Right cardiac atrium (tissue), 5 donors: ENCODE measurements at regions of chr17 and their contacts with region 1.

Region 1: DNA sequence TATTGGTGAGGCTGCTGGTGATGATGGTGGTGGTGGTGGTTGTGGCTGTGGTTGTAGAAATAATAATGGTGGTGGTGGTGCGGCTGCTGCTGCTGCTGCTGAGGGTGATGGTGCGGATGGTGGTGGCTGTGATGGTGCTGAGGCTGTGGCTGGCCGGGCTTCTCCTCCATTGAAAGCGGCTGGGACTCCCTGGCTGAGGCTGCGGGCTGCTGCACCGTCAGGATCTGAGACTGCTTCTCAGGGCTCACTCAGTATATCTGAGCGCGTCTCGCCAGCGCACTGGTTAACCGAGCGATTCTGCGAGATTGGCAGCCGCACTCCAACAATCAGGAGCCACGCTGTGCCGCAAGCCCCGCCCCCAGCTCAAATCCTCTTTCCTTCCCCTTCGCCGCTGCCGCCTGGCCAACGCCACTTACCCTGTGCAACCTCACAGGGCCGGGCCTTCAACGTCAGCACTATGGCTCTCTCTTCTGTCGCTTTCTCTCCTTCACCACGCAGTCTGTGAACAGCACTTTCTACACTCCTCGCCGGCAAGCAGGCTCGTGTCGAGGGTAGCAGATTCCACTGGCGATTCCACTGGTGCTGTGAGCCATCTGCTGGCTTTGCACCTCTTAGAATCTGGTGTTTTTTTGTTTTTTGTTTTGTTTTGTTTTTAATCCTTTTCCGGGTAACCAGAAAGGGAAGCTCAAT is at the start of gene NUFIP2:
- DNase-seq: peak; percentile 99 to 100 (median 100)
- ATAC-seq: peak; percentile 96
- H3K4me3 ChIP-seq: peak within 1 kb of the TSS; percentile 91
- H3K27ac ChIP-seq: peak within 1 kb of the TSS; percentile 97
- H3K4me1 ChIP-seq: no peaks in the 10 kb centered on the region
- H3K27me3 ChIP-seq: no peaks in the 10 kb centered on the region
- total RNA-seq, gene NUFIP2: 30.9 to 44.7 (median 41.4) TPM

Region 2: GRCh38 chr17:28951991-28952975 is 341.8 kb before region 1 on chr17:
- intact Hi-C with region 1: loop called in 1 of 4 experiments (anchors 10 kb)
- DNase-seq: peak; percentile 96 to 99 (median 97)
- ATAC-seq: peak; percentile 89 to 91
- H3K4me3 ChIP-seq: peak overlapping the region; percentile 66
- H3K27ac ChIP-seq: peak overlapping the region; percentile 99
- H3K4me1 ChIP-seq: no peaks in the 10 kb centered on the region
- H3K27me3 ChIP-seq: no peaks in the 10 kb centered on the region

Region 3: DNA sequence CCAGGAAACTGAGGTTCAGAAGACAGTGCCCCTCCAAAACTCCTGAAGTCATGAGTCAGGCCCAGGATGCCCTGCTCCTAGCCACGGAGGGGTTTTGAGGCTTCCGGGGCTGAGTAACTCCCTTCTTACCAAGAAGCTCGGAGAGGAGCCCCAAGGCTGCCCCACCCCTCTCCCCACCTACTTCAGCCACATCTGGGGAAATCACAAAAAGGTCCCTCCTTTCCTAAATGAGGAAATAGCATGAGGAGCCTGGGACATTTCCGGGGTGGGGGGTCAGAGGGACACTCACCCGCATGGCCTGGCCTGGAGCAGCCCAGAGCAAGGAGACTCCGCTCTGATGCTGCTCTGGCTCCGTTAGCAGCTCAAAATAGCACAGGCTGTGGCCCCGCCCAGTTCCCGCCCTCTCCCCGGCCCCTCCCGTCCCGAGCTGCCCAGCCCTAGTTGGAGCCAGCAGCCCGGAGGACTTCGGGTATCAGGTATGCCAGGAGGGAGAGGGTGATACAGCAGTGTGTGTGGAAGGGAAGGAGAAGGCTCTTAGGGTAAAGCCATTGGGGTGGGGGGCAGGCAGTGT is 153.9 kb before region 1 on chr17:
- intact Hi-C with region 1: loop called in 1 of 4 experiments (anchors 5 kb)
- DNase-seq: peak; percentile 88 to 95 (median 95)
- ATAC-seq: peak; percentile 93 to 94
- H3K4me3 ChIP-seq: peak overlapping the region; percentile 62
- H3K27ac ChIP-seq: peak overlapping the region; percentile 95
- H3K4me1 ChIP-seq: peaks cover 22% of the 10 kb centered on the region
- H3K27me3 ChIP-seq: no peaks in the 10 kb centered on the region